Activated naive CD4-positive, alpha-beta T cell treated with anti-CD3 and anti-CD28 coated beads for 36 hours (primary cell): ENCODE measurements at regions of chr17 and their contacts with region 1.

Region 1: DNA sequence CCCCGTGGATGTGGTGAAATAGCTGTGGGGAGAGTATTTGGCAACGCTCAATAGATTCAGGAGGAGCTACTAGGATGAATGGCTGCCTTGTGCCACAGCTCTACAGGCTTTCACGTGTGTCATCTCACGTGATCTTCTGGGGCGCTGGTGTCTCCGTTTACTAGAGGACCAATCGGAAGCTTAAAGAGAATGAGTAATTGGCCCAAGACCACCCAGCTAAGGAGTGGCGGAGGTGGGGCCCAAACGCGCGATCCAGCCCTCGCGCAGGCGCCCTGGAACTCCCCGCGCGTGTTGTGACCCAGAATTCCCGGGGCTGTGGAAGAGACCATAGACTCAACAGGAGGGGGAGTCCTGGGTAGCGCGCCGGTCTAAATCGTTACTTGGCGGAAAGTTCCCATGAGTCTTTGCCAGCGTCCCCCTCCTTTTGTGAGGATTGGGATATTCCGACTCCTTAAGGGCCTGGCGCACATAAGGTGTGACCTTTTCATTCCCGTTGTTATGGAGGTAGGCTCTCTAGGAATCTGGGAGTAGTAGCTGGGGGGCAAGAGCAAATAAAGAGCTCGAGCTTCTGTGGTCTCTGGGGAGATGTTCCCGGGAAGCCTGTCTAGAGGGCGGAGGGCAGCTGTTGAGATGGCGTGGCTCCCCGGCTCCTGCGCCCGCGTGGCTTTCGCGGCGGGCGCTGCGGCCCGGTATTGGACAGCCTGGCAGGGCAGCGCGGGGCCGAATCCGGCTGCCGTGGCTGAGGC is 23.4 kb downstream of the TRPV2 start:
- DNase-seq: peak; percentile 98
- H3K4me3 Mint-ChIP-seq: peak overlapping the region; percentile 99
- H3K27ac Mint-ChIP-seq: peak overlapping the region; percentile 99
- H3K4me1 Mint-ChIP-seq: peaks cover 39% of the 10 kb centered on the region
- H3K27me3 Mint-ChIP-seq: no peaks in the 10 kb centered on the region

Region 2: DNA sequence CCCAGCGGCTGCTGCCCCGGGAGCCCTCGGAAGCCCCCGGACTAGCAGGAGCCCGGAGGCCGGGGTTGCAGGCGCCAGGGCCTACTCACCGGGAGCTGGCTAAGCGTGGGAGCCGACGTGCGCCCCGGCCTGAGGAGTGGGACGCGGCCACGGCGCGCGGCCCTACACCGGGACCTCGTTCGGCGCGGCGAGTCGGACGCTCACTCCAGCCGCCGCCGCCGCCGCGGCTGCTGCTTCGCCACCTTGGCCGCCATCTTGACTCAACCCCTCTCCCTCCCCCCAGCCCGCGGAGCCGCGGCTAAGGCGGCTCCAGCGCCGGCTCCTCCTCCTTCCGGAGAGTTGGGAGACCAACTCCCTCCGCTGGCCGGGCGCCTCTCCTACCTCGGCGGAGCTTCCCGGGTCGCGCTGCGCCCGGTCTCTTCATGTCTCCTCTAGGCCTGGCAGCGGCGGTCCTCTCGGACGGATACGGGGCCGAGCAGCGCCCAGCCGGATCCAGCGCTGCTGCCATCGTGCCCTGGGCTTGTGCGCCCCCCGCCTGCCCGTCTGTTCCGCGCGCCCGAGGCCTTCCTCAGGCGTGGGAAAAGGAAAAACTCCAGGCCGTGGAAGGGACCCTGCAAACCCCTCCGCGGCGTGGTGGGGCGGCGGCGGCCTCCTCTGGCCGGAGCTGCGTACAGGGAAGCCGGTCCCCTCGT is 223.3 kb before region 1 on chr17 and contains the start of gene NCOR1:
- CTCF ChIA-PET with region 1: no interaction called
- intact Hi-C with region 1: loop called (anchors 1 kb)
- DNase-seq: peak; percentile 93
- H3K4me3 Mint-ChIP-seq: peak within 1 kb of the TSS; percentile 99
- H3K27ac Mint-ChIP-seq: peak within 1 kb of the TSS; percentile 95
- H3K4me1 Mint-ChIP-seq: peaks cover 44% of the 10 kb centered on the region
- H3K27me3 Mint-ChIP-seq: no peaks in the 10 kb centered on the region
- total RNA-seq, gene NCOR1: 101 to 104 TPM

Region 3: DNA sequence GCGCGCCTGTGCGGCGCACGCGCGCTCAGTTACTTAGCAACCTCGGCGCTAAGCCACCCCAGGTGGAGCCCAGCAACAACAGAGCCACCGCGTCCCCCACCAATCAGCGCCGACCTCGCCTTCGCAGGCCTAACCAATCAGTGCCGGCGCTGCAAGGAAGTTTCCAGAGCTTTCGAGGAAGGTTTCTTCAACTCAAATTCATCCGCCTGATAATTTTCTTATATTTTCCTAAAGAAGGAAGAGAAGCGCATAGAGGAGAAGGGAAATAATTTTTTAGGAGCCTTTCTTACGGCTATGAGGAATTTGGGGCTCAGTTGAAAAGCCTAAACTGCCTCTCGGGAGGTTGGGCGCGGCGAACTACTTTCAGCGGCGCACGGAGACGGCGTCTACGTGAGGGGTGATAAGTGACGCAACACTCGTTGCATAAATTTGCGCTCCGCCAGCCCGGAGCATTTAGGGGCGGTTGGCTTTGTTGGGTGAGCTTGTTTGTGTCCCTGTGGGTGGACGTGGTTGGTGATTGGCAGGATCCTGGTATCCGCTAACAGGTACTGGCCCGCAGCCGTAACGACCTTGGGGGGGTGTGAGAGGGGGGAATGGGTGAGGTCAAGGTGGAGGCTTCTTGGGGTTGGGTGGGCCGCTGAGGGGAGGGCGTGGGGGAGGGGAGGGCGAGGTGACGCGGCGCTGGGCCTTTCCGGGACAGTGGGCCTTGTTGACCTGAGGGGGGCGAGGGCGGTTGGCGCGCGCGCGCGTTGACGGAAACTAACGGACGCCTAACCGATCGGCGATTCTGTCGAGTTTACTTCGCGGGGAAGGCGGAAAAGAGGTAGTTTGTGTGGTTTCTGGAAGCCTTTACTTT is 57.9 kb before region 1 on chr17 and contains the start of gene UBB:
- CTCF ChIA-PET with region 1: interaction called, 3 read pairs
- intact Hi-C with region 1: loop called (anchors 1 kb)
- DNase-seq: peak; percentile 96
- H3K4me3 Mint-ChIP-seq: peak within 1 kb of the TSS; percentile 90
- H3K27ac Mint-ChIP-seq: peak within 1 kb of the TSS; percentile 96
- H3K4me1 Mint-ChIP-seq: peaks cover 35% of the 10 kb centered on the region
- H3K27me3 Mint-ChIP-seq: no peaks in the 10 kb centered on the region
- total RNA-seq, gene UBB: 1,579 to 1,628 TPM

Region 4: GRCh38 chr17:16428098-16428882 is 10.4 kb before region 1 on chr17:
- CTCF ChIA-PET with region 1: interaction called, 17 read pairs
- intact Hi-C with region 1: no loop called
- DNase-seq: peak; percentile 64
- H3K4me3 Mint-ChIP-seq: no peak overlapping the region
- H3K27ac Mint-ChIP-seq: no peak overlapping the region
- H3K4me1 Mint-ChIP-seq: peaks cover 2% of the 10 kb centered on the region
- H3K27me3 Mint-ChIP-seq: no peaks in the 10 kb centered on the region

Region 5: GRCh38 chr17:16589097-16589969 is 150.6 kb after region 1 on chr17:
- CTCF ChIA-PET with region 1: no interaction called
- intact Hi-C with region 1: loop called (anchors 5 kb)
- DNase-seq: peak; percentile 94
- H3K4me3 Mint-ChIP-seq: peak overlapping the region; percentile 69
- H3K27ac Mint-ChIP-seq: no peak overlapping the region
- H3K4me1 Mint-ChIP-seq: peaks cover 3% of the 10 kb centered on the region
- H3K27me3 Mint-ChIP-seq: peaks cover 22% of the 10 kb centered on the region